Ascending aorta (tissue), 2 donors: ENCODE measurements at regions of chrX and their contacts with region 1.

Region 1: DNA sequence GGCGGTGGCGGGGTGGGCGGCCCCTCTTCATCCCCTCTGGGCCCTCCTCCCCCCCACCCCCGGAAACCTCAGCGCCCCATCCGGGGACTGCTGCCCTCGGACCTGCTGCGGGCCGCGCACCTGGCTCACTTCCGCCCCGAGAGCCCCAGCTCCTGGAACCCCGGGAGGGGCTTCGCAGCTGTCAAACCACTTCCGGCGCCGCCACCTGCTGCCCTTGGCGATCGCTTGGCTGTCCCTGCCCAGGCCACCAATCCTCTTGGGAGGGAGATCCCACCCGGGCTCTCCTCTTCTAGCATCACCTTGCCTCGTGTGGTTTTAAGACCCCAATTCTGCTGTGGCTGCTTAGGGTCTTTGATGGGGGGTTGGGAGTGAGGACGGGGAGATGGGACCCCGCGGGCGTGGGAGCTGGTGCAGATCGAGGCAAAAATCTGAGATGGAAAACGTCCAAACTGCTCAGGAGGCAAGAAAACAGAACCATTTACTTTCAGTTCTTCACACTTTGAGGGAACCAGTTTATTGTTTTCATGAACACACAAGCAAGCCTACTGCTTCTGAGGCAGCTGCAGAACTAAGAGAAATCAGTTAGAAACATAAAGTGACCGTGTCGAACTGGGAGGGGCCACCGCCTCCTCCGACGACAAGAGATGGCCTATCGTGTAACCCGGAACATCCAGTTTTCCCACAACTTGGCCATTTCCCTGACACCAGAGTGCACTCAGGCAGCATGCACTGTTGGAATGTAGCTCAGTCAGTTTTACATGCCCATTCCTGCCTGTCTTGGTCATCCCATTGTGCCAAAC is 779 bp downstream of the MTMR1 start:
- DNase-seq: peak in 1 of 2 donors; percentile 77
- H3K4me3 ChIP-seq: peak overlapping the region; percentile 66 to 72
- H3K27ac ChIP-seq: peak overlapping the region; percentile 91 to 93
- H3K4me1 ChIP-seq: no peaks in the 10 kb centered on the region
- H3K27me3 ChIP-seq: no peaks in the 10 kb centered on the region
- CTCF ChIP-seq: no peak

Region 2: DNA sequence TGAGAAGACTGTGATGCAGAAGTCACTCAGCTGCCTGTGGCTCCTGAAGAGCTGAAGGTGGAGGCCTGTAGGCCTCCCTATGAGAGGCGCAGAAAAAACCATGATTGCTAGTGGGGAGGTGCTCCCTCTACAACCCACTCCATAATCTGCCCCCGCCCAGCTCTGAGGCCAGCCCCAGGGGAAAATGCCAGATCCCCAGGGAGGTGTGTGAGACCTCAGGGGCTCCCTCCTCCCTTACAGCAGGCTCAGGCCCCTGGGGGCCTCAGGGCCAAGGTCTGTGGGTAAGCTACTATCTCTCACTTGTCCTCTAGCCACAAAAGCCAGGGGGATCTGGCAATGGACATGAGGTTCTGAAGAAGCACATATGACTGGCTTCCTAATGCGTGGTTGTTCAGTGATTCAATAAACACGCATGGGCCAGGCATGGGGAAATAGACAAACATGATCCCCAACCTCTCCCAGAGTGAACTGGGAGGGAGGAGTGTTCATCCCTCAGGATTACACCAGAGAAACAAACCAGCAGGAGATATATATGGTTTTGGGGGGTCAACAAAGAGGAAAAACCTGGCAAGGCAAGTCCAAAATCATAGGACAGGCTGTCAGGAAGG is 176.6 kb before region 1 on chrX:
- intact Hi-C with region 1: loop called (anchors 10 kb)
- DNase-seq: no peak
- H3K4me3 ChIP-seq: no peak overlapping the region
- H3K27ac ChIP-seq: no peak overlapping the region
- H3K4me1 ChIP-seq: no peaks in the 10 kb centered on the region
- H3K27me3 ChIP-seq: no peaks in the 10 kb centered on the region
- CTCF ChIP-seq: no peak